Right ventricle myocardium superior (tissue), 1 donor: ENCODE measurements at regions of chr18 and their contacts with region 1.

Region 1: GRCh38 chr18:26090130-26091046 is at the start of gene SS18:
- DNase-seq: peak; percentile 96
- ATAC-seq: peak; percentile 97
- total RNA-seq, gene SS18: 23.5 TPM

Region 2: DNA sequence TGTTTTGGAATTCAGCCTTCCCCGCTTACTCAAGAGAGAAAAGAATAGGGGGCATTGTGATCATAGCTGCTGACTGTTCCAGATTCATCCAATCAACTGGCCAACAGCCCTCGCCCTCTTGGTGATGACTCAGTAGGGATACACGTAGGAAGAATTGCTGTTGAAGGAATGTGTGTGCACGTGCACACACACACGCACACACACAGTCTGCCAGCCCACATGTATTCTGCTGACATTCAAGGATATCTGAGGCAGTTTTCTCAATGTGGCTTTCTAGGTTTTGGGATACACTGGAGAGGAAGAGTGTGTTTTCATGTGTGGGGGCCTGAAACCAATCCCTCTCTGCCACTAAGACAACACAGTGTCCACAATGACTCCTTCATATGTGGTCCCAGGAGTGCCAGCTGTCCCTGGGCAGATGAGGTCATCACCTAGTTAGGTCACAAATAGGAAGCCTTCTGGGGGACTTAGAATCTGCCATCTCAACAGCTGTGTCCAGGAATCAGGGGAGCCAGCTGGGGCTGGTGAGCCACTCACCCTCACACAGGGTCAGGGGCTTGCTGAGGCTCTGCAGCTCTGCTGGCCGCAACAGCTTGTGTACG is 352.6 kb before region 1 on chr18:
- intact Hi-C with region 1: no loop called
- DNase-seq: no peak
- ATAC-seq: no peak

Region 3: GRCh38 chr18:26226229-26227005 is 136.0 kb after region 1 on chr18 and contains the start of gene TAF4B:
- intact Hi-C with region 1: loop called (anchors 10 kb)
- DNase-seq: peak; percentile 96
- ATAC-seq: peak; percentile 100
- total RNA-seq, gene TAF4B: 1.5 TPM

Region 4: GRCh38 chr18:26268454-26268853 is 178.1 kb after region 1 on chr18:
- intact Hi-C with region 1: no loop called
- DNase-seq: no peak
- ATAC-seq: no peak